ENCODE measurements at regions of chr5 and their contacts with region 1.

Region 1: GRCh38 chr5:60960591-60960990 is 15.6 kb downstream of the NDUFAF2 start:
- DNase-seq: peak; percentile 43
- H3K4me3 ChIP-seq: no peak overlapping the region
- H3K27ac ChIP-seq: no peak overlapping the region
- H3K4me1 ChIP-seq: peaks cover 22% of the 10 kb centered on the region
- H3K27me3 ChIP-seq: no peaks in the 10 kb centered on the region
- CTCF ChIP-seq: peak; percentile 75

Region 2: DNA sequence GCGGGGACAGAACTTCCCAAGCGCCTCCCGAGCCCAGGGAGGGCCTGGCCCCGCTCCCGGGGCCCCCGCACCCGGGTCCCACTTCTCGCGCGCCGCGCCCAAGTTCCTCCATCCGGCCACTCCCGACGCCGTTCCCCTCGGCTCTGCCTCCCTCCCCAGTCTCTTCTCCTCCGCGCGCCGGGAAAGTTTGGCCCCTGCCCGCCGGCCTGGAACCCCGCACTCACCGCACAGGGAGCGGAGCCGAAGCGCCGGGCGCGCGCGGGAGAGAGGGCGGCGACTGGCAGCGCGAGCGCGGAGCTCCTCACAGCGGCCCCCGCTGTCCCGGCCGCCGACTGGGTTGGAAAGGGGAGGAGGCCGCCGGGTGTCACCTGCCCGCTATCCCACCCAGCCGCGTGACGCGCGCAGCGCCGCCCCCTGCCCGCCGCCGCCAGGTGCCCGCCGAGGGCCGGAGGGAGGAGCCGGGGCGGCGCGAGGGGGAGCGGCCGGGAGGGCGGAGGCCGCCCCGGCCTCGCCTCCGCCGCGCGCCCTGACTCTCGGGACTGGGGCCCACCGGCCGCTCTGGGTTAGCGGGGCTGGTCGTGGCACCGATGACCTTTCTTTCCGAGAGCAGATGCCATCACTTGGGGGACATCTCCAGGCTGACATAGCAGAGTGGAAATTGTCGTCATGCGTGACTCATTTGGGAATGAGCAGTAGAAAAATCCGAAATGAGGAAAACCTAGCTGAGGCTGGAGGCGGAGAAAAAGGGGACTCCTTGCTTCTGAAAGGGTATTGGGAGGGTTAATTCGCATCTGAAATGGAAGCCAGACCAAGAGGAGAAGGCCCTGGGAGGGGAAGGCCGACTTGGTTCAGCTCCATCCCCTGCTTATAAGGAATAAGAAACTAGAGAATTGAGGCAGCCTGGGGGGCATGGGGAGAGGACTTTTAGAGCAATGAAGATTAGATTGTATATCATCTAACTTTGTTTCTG is 116.4 kb before region 1 on chr5 and contains the start of gene ELOVL7:
- CTCF ChIA-PET with region 1: no interaction called
- POLR2A ChIA-PET with region 1: no interaction called
- intact Hi-C with region 1: no loop called
- DNase-seq: peak; percentile 45
- H3K4me3 ChIP-seq: peak within 1 kb of the TSS; percentile 54
- H3K27ac ChIP-seq: no peak within 1 kb of the TSS
- H3K4me1 ChIP-seq: no peaks in the 10 kb centered on the region
- H3K27me3 ChIP-seq: peaks cover 81% of the 10 kb centered on the region
- CTCF ChIP-seq: peak; percentile 30; the same call in 1 of the 2 replicates
- total RNA-seq, gene ELOVL7: 0.15 TPM in 1 of 2 replicates, not detected in the other

Region 3: DNA sequence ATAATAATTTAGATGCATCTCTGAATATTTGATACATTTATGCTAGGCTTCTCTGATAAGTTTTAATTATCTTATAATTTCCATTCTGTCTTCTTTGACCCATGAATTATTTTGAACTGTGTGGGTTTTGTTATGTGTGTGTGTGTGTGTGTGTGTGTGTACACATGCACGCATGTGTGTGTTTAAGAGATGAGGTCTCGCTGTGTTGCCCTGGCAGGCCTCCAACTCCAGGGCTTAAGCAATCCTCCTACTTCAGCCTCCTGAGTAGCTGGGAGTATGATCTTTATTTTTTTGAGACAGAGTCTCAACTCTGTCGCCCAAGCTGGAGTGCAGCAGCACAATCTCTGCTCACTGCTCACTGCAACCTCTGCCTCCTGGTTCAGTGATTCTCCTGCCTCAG is 59.8 kb after region 1 on chr5:
- CTCF ChIA-PET with region 1: no interaction called
- POLR2A ChIA-PET with region 1: no interaction called
- intact Hi-C with region 1: no loop called
- DNase-seq: peak; percentile 83
- H3K4me3 ChIP-seq: no peak overlapping the region
- H3K27ac ChIP-seq: peak overlapping the region; percentile 24
- H3K4me1 ChIP-seq: peaks cover 47% of the 10 kb centered on the region
- H3K27me3 ChIP-seq: no peaks in the 10 kb centered on the region
- CTCF ChIP-seq: no peak

Region 4: GRCh38 chr5:61658592-61659008 is 698.0 kb after region 1 on chr5:
- CTCF ChIA-PET with region 1: no interaction called
- POLR2A ChIA-PET with region 1: no interaction called
- intact Hi-C with region 1: loop called (anchors 10 kb)
- DNase-seq: peak; percentile 86
- H3K4me3 ChIP-seq: no peak overlapping the region
- H3K27ac ChIP-seq: no peak overlapping the region
- H3K4me1 ChIP-seq: peaks cover 30% of the 10 kb centered on the region
- H3K27me3 ChIP-seq: no peaks in the 10 kb centered on the region
- CTCF ChIP-seq: peak; percentile 97

Region 5: GRCh38 chr5:62143268-62144229 is 1183.0 kb after region 1 on chr5:
- CTCF ChIA-PET with region 1: no interaction called
- POLR2A ChIA-PET with region 1: interaction called, 3 read pairs
- intact Hi-C with region 1: loop called (anchors 10 kb)
- DNase-seq: peak; percentile 72
- H3K4me3 ChIP-seq: peak overlapping the region; percentile 12
- H3K27ac ChIP-seq: no peak overlapping the region
- H3K4me1 ChIP-seq: peaks cover 21% of the 10 kb centered on the region
- H3K27me3 ChIP-seq: no peaks in the 10 kb centered on the region
- CTCF ChIP-seq: peak; percentile 84